ENCODE measurements at regions of chr4 and their contacts with region 1.

Region 1: GRCh38 chr4:83009529-83009928 is 1.1 kb downstream of the LIN54 start:
- DNase-seq: no peak
- ATAC-seq: no peak
- H3K4me3 ChIP-seq: peak overlapping the region; percentile 75 to 85 (median 80)
- H3K27ac ChIP-seq: peak overlapping the region in 1 of 3 donors; percentile 76
- H3K4me1 ChIP-seq: peaks cover 0 to 23% (median 11%) of the 10 kb centered on the region in 4 donors
- H3K27me3 ChIP-seq: no peaks in the 10 kb centered on the region
- CTCF ChIP-seq: no peak
- POLR2A ChIP-seq: no peak

Region 2: DNA sequence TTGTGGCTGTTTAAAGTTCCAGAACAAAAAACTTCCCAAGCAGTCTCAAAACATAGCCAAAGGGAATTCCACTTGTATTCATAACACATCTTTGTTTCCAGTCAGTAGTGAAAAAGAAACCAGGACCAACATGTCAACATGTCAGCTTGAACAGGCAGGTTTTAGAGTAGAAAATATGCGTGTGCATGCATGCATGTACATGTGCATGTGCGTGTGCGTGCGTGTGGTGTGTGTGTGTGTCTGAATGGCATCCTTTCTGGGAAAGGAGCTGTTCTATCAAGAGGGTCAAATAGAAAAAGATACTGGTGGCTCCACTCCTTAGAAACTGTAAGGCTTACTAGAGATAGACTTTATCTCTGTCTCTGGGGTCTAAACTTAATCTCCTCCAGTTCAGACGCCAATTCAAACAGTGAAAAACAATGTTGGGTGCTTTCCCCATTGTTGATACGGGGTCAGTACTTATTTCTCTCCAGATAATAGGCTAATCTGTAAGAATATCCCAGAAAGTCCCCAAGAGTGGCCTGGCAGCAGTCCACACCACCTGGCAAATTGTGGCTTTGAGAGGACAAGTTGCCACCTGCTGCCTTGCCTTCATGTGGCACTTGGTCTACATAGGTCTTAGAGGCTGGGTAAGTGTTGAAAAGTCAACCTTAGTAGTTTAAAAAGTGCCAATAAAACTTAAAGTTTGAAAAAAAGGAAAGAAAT is 321.3 kb before region 1 on chr4:
- intact Hi-C with region 1: no loop called
- DNase-seq: no peak
- ATAC-seq: no peak
- H3K4me3 ChIP-seq: no peak overlapping the region
- H3K27ac ChIP-seq: no peak overlapping the region
- H3K4me1 ChIP-seq: no peaks in the 10 kb centered on the region
- H3K27me3 ChIP-seq: no peaks in the 10 kb centered on the region
- CTCF ChIP-seq: no peak
- POLR2A ChIP-seq: no peak

Region 3: GRCh38 chr4:82900331-82901128 is 109.0 kb before region 1 on chr4 and contains the start of gene THAP9:
- intact Hi-C with region 1: loop called in 1 of 2 experiments (anchors 10 kb)
- DNase-seq: peak; percentile 99
- ATAC-seq: peak; percentile 94 to 98 (median 96)
- H3K4me3 ChIP-seq: peak within 1 kb of the TSS; percentile 58 to 73 (median 71)
- H3K27ac ChIP-seq: peak within 1 kb of the TSS; percentile 97
- H3K4me1 ChIP-seq: peaks cover 0 to 16% (median 6%) of the 10 kb centered on the region in 4 donors
- H3K27me3 ChIP-seq: no peaks in the 10 kb centered on the region
- CTCF ChIP-seq: no peak
- POLR2A ChIP-seq: peak; percentile 62
- total RNA-seq, gene THAP9: 0.92 to 3.8 (median 3.0) TPM